GM10248 (cell line): ENCODE measurements at regions of chr4 and their contacts with region 1.

Region 1: GRCh38 chr4:51831133-51831532 is 11.8 kb upstream of the DCUN1D4 start:
- DNase-seq: peak; percentile 32
- CTCF ChIP-seq: peak; percentile 83

Region 2: DNA sequence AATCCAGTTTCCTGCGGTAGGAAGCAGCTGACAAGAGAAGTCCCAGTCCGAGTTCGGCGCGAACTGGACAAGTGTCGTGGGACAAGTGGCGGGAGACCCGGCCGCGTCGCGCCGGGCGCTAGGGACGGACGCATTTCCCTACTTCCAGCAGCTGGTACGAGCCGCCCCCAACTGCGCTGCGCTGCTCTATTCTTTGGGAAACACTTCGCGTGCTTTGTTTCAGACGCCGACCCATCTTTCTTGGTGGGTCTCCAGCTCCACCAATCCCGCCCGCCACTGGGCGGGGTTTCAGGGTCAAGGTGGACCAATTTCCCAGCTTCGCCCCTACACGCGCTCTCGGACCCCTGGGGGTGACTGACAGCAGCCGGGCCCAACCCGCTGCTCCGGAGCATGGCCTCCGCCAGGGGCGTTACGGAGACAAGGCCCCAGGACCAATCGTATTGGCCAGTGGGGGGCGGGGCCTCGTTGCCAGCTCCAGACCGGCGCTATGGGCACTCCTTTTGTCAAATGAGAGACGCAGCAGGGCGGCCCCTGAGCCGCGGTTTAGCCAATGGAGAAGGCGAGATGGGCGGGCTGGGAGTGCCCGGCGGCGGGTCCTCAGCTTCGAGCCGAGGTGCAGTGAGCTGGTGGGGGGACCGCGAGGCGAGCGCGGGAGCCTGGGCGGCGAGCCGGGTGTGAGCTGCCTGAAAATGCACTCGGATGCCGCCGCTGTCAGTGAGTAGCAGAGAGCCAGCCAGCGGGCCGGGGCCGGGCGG is 11.6 kb after region 1 on chr4 and contains the start of gene DCUN1D4:
- CTCF ChIA-PET with region 1: interaction called, 19 read pairs
- POLR2A ChIA-PET with region 1: no interaction called
- DNase-seq: peak; percentile 100
- CTCF ChIP-seq: no peak

Region 3: GRCh38 chr4:52028969-52029368 is 197.8 kb after region 1 on chr4:
- CTCF ChIA-PET with region 1: interaction called, 19 read pairs
- POLR2A ChIA-PET with region 1: no interaction called
- DNase-seq: no peak
- CTCF ChIP-seq: no peak

Region 4: DNA sequence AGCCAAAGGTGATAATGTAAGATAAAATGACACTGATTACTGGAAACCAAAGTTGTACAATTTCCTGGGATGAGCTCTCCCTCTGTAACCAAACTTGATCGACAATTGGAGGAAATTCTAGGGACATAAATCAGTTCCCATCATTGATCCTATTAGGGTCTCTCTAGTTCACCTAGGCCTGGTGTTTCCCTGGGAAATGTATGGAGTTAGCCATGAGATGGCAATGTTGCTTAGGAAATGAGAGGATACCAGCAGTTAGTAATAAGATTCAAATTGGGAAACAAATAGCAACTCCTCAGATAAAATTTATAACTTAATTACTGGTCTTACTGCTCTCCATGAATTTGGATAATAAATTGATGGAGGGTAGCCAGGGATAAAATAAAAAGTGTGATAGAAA is 272.2 kb after region 1 on chr4:
- CTCF ChIA-PET with region 1: no interaction called
- POLR2A ChIA-PET with region 1: no interaction called
- DNase-seq: no peak
- CTCF ChIP-seq: no peak